Body of pancreas (tissue), 4 donors: ENCODE measurements at regions of chrX and their contacts with region 1.

Region 1: GRCh38 chrX:108537005-108537404 is 97.4 kb downstream of the COL4A5 start:
- DNase-seq: peak in 3 of 4 donors; percentile 9 to 29 (median 16)
- ATAC-seq: no peak
- H3K4me3 ChIP-seq: no peak overlapping the region
- H3K27ac ChIP-seq: no peak overlapping the region
- H3K4me1 ChIP-seq: no peaks in the 10 kb centered on the region
- H3K27me3 ChIP-seq: no peaks in the 10 kb centered on the region
- CTCF ChIP-seq: peak; percentile 21 to 70 (median 50)
- POLR2A ChIP-seq: no peak

Region 2: DNA sequence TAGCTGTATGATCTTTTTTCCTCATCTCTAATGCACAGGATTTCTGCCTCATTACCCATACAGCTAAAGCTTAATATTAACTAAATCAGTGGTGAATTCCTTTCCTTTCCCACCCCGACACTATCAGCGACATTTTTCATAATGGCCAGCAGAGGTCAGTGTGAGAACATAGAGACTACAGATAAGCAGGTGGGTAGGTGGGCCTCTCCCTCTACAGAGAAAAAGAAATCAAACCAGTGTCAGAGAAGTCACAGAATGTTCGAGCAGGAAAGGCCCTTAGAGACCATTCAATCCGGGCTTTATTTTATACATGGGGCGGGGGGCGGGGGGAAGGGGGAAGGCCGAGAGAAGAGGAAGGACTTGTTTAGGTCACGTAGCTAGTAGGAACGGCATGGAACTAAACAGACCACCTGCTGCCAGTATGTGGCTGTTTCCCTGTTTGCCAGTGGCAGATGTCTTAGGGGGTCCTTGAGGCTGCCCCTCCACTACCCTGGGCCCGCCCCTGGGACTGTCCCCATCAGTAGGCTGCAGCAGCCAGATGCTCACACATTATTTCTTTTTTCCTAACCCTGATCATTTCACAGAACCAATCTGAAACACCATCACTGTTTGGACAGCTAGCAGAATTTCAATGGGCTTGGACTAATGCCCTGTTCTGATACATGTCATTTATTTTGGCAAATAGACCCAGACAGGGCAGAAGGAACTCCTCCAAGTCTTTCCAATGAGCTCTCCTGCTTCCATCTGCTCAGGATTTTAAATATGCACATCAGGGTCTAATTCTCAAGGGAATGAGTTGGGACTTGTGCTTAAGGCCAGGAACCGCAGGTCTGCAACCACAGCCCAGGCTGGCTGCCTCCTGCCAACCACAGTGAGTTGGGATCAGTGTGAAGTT is 312.0 kb before region 1 on chrX:
- intact Hi-C with region 1: loop called (anchors 10 kb)
- DNase-seq: peak in 1 of 4 donors; percentile 12
- ATAC-seq: no peak
- H3K4me3 ChIP-seq: no peak overlapping the region
- H3K27ac ChIP-seq: no peak overlapping the region
- H3K4me1 ChIP-seq: no peaks in the 10 kb centered on the region
- H3K27me3 ChIP-seq: no peaks in the 10 kb centered on the region
- CTCF ChIP-seq: peak; percentile 17 to 56 (median 37)
- POLR2A ChIP-seq: no peak